AG04449 (cell line): ENCODE measurements at regions of chr1 and their contacts with region 1.

Region 1: DNA sequence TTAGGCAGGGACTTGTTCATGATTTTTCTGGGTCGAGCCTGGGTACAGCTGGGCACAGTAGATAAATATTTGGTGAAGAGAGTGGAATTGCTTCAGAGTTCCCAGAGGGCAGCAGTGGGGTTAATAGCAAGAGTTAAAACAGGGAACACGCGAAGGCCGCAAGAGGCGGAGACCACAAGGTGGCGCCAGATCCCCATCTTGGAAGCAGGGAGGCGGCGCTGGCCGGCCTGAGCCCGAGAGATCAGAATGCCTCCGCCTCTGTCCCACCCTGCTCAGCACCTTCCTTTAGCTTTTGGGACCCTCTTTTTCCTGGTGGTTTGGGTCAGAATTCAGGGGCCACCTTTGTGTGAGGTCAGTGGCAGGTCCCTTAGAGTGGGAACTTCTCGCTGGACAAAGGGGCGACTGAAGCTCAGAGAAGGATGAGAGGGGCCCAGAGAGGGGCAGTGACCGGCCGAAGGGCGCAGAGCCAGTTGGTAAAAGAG is 6.5 kb upstream of the PADI2 start:
- DNase-seq: no peak
- H3K4me3 ChIP-seq: no peak overlapping the region
- CTCF ChIP-seq: peak; percentile 97

Region 2: GRCh38 chr1:17168091-17168876 is 42.5 kb after region 1 on chr1:
- CTCF ChIA-PET with region 1: interaction called, 8 read pairs
- POLR2A ChIA-PET with region 1: interaction called, 16 read pairs
- DNase-seq: peak; percentile 89
- H3K4me3 ChIP-seq: no peak overlapping the region
- CTCF ChIP-seq: no peak

Region 3: DNA sequence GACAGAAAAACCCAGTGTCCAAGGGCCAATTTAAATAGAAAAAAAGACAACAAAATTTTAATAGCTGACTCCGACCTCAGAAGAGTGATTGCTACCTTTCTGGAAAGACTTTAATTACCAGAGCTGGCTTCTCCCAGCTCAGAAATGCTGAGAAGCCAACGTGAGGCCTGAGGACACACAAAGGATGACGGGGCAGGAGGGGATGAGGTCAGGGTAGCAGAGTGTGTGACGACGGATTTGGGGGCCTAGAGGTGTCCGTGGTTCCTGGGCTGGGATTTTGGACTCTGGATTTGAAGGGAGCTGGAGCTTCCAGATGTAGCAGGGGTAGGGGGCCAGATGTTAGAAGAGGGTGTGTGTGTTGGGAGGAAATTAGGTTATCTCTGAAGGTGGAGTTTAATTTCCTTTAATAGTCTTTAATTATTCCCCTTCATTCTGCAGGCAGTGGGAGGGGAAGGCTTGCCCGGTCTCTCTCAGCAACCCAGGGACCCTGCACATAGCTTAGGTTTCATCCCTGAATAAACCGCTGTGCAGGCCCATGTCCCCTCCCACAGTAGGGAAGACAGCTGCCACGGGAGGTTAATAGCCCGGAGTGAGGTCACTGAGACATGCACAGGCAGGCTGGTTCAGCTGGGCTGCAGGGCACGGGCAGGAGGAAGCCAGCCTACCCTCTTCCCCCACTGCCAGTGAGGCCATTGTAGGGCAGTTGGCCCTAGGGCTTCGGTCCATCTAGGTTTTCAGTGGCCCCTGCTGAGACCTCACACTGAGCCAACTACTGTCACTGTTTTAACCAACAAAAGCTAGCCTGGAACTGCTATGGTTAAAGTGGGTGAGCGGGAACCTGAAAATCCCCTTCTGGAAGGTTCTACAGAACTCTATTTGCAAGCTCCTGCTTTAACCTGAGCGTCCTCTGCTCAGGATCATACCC is 119.3 kb after region 1 on chr1:
- CTCF ChIA-PET with region 1: interaction called, 669 read pairs
- POLR2A ChIA-PET with region 1: interaction called, 4 read pairs
- DNase-seq: no peak
- H3K4me3 ChIP-seq: no peak overlapping the region
- CTCF ChIP-seq: no peak

Region 4: GRCh38 chr1:17259233-17259873 is 133.6 kb after region 1 on chr1:
- CTCF ChIA-PET with region 1: interaction called, 13 read pairs
- POLR2A ChIA-PET with region 1: no interaction called
- DNase-seq: no peak
- H3K4me3 ChIP-seq: no peak overlapping the region
- CTCF ChIP-seq: no peak

Region 5: DNA sequence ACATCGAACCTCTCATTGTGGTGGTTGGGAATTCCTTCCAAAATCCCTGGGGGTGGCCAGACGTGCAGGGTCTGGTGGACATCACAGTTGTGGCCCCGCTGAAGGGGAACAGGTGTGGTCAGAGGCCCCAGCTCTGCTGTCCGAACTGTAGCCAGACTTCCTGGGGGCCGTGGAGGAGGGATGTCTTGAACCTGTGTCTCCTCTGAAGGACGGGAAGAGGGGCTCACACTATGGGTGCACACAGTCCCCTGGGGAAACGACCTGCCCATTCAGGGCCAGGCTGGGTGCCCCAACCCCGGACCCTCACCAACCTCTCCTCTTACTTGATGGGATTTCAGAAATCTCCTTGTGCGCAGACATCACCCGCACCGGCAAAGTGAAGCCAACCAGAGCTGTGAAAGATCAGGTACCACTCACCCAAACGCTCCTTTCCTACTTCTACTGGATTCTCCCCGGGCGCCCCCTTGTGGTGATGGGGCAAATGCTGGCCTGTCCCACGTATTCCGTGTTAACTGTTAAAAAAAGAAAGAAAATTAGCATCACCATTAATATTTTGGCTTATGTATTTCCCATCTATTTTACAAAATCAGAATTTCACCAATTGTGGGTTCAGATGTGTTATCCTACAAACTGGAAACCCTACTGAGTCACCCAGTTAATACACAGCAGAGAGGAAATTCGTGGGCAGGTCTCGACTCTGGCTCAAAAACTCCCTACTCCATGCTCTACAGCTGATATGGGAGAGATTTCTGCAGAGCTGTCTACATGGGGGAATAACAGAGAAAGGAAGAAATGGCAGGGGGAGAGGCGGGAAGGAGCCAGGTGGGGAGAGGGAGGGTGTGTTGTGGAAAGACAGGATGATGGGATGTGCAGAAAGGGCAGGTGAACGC is 210.3 kb after region 1 on chr1:
- CTCF ChIA-PET with region 1: interaction called, 136 read pairs
- POLR2A ChIA-PET with region 1: no interaction called
- DNase-seq: no peak
- H3K4me3 ChIP-seq: no peak overlapping the region
- CTCF ChIP-seq: peak; percentile 88